Kidney (tissue), 22 donors: ENCODE measurements at regions of chr7 and their contacts with region 1.

Region 1: GRCh38 chr7:16695621-16696237 is 49.7 kb downstream of the BZW2 start:
- DNase-seq: peak in 2 of 5 donors; percentile 60 to 70
- H3K4me3 ChIP-seq: no peak overlapping the region
- H3K27ac ChIP-seq: no peak overlapping the region
- H3K4me1 ChIP-seq: no peaks in the 10 kb centered on the region
- H3K27me3 ChIP-seq: no peaks in the 10 kb centered on the region
- CTCF ChIP-seq: peak; percentile 39

Region 2: GRCh38 chr7:16847366-16847864 is 151.7 kb after region 1 on chr7:
- intact Hi-C with region 1: no loop called
- DNase-seq: peak in 3 of 5 donors; percentile 29 to 45 (median 30)
- H3K4me3 ChIP-seq: no peak overlapping the region
- H3K27ac ChIP-seq: no peak overlapping the region
- H3K4me1 ChIP-seq: no peaks in the 10 kb centered on the region
- H3K27me3 ChIP-seq: no peaks in the 10 kb centered on the region
- CTCF ChIP-seq: no peak

Region 3: GRCh38 chr7:16918288-16918895 is 222.7 kb after region 1 on chr7:
- intact Hi-C with region 1: loop called (anchors 10 kb)
- DNase-seq: peak in 2 of 5 donors; percentile 66 to 67
- H3K4me3 ChIP-seq: no peak overlapping the region
- H3K27ac ChIP-seq: no peak overlapping the region
- H3K4me1 ChIP-seq: peaks cover 6 to 13% (median 7%) of the 10 kb centered on the region in 3 donors
- H3K27me3 ChIP-seq: no peaks in the 10 kb centered on the region
- CTCF ChIP-seq: peak; percentile 52